ENCODE measurements at regions of chr20 and their contacts with region 1.

Region 1: DNA sequence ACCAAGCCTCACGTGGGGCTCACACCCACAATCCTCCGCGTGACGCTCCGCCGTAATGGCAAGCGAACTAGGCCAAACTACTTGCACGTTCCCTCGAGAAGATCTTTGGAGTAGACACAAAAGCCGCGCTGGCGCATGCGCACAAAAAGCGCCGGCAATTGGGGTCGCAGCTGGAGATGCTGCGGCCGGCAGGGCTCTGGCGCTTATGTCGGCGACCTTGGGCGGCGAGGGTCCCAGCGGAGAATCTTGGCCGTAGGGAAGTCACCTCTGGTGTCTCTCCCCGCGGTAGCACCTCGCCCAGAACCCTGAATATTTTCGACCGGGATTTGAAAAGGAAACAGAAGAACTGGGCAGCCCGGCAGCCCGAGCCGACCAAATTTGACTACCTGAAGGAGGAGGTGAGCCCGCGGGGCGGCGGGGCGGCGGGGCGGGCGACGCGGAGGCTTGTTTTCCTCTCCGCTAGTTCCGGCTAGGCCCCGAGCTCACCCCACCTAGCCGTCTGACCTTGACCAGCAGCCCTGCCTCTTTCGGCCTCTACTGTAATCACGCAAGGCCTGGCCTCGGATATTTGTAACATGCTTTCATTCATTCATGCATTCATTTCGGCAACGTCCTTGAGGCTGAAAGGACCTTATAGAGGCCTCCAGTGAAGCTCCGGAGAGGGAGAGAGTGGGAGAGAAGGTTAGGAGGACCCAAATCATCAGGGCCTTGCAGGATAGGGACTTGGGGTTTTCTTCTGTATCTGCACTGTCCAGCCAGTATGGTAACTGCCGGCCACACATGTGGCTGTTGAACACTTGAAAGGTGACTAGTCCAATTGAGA is at the starts of genes ESF1 and NDUFAF5:
- DNase-seq: peak; percentile 91 to 99 (median 96)

Region 2: DNA sequence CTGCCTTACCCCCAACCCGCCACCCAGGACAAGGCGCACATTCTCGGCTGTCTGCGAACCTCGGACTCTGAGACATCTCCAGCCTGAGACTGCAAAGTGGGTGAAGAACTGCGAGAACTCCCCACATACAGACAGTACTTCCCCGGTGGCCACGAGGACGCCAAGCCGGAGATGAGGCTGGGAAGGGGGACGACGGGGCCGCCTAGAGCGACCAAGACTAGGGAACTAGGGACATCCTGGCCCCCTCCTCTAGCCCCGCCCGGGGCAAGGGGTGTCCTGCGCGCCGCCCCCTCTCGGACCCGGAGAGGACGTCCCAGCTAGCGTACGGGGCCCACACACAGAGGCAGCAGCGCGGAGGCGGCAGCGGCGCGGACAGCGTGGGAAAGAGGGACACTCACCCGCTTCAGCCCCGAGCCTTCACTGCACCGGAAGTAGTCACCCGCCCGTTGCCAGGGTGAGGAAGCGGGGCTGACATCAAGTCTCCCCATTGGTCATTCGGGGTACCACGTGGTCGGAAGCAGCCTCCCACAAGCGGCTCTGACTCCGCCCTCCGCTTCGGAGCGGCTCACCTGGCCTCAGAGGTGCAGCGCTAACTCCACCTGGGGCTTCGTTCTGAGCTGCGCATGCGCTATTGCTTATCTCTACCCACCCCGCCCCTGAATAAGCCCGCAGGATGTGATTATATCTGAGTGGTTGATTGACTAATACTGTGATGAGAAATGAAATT is 146.4 kb before region 1 on chr20 and contains the start of gene TASP1:
- intact Hi-C with region 1: loop called (anchors 5 kb)
- DNase-seq: peak; percentile 93 to 99 (median 97)

Region 3: DNA sequence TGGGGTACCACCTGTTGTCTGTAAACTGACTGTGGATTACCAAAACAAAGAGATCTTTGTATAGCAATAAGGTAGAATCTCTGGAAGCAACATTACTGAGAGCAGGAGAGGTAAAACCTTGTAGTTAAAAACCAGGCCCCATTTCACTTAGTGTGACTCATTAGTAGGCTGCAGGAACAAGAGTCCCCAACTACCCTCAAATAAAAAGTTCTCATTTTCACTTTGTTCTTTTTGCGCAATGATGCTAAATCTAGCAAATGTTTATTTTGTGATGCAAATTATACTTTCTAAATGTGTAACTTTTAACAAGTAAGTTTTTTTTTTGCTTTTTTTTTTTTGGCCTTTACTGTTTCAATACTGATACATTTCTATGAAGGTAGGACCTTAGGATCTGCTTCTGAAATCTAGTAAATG is 67.5 kb before region 1 on chr20:
- intact Hi-C with region 1: no loop called
- DNase-seq: no peak

Measured in posterior cingulate gyrus (tissue), 11 donors.